Dendritic cell treated with granulocyte-macrophage colony-stimulating factor and Interleukin-4, amounts not matched to agents 40 ng/mL and 50 ng/mL, for 4 days (primary cell): ENCODE measurements at regions of chr1 and their contacts with region 1.

Region 1: GRCh38 chr1:230917284-230918135 is 49.2 kb upstream of the C1orf198 start:
- H3K4me3 Mint-ChIP-seq: no peak overlapping the region
- H3K27ac Mint-ChIP-seq: no peak overlapping the region
- H3K4me1 Mint-ChIP-seq: no peaks in the 10 kb centered on the region
- H3K27me3 Mint-ChIP-seq: no peaks in the 10 kb centered on the region

Region 2: GRCh38 chr1:231091831-231092301 is 174.4 kb after region 1 on chr1:
- intact Hi-C with region 1: loop called (anchors 2 kb)
- H3K4me3 Mint-ChIP-seq: no peak overlapping the region
- H3K27ac Mint-ChIP-seq: no peak overlapping the region
- H3K4me1 Mint-ChIP-seq: peaks cover 16% of the 10 kb centered on the region
- H3K27me3 Mint-ChIP-seq: peaks cover 22% of the 10 kb centered on the region